ENCODE measurements at regions of chr13 and their contacts with region 1.

Region 1: DNA sequence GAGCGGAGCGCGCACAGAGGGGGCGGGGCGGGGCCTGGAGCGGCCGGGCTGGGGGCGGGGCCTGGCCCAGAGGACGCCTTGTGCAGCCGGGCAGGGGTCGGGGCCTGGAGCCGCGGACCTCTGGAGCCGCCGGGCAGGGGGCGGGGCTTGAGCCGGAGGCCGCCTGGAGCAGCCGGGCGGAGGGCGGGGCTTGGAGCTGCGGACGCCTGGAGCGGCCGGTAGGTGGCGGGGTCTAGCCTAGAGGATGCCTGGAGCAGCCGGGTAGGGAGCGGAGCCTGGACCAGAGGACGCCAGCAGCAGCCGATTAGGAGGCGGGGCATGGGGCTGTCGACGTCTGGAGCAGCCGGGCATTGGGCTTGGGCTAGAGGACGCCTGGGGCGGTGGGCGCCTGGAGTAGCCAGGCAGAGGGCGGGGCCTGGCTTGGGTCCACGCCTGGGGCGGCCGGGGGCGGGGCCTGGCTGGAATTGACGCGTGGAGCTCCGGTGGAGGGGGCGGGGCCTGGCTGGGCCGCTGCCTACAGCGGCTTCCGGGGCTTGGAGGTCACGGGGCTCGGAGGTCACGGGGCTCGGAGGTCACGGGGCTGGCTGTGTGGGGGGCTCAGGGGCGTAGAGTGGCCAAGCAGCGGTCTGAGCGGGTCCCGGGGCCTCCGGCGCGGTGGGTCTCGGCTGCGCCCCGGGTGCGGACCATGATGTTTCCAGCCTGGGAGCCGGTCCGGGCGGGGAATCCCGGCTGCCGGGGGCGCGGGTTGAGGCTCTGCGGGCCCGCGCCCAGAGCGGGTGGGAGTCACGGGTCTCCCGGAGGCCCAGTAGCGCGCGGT is at the start of gene ANKRD10:
- DNase-seq: peak; percentile 95
- H3K4me3 Mint-ChIP-seq: peak within 1 kb of the TSS; percentile 94
- H3K27ac Mint-ChIP-seq: peak within 1 kb of the TSS; percentile 95
- H3K4me1 Mint-ChIP-seq: peaks cover 53% of the 10 kb centered on the region
- H3K27me3 Mint-ChIP-seq: no peaks in the 10 kb centered on the region
- total RNA-seq, gene ANKRD10: 163 and 176 TPM in 2 replicates

Region 2: GRCh38 chr13:110882972-110883371 is 32.3 kb before region 1 on chr13:
- intact Hi-C with region 1: loop called (anchors 2 kb)
- DNase-seq: no peak
- H3K4me3 Mint-ChIP-seq: no peak overlapping the region
- H3K27ac Mint-ChIP-seq: no peak overlapping the region
- H3K4me1 Mint-ChIP-seq: peaks cover 16% of the 10 kb centered on the region
- H3K27me3 Mint-ChIP-seq: no peaks in the 10 kb centered on the region

Region 3: GRCh38 chr13:110965038-110965754 is 49.9 kb after region 1 on chr13:
- intact Hi-C with region 1: loop called (anchors 1 kb)
- DNase-seq: peak; percentile 55
- H3K4me3 Mint-ChIP-seq: peak overlapping the region; percentile 32
- H3K27ac Mint-ChIP-seq: peak overlapping the region; percentile 95
- H3K4me1 Mint-ChIP-seq: peaks cover 54% of the 10 kb centered on the region
- H3K27me3 Mint-ChIP-seq: peaks cover 2% of the 10 kb centered on the region

Region 4: GRCh38 chr13:111066544-111066943 is 151.3 kb after region 1 on chr13:
- intact Hi-C with region 1: loop called (anchors 2 kb)
- DNase-seq: no peak
- H3K4me3 Mint-ChIP-seq: peak overlapping the region; percentile 78
- H3K27ac Mint-ChIP-seq: no peak overlapping the region
- H3K4me1 Mint-ChIP-seq: peaks cover 6% of the 10 kb centered on the region
- H3K27me3 Mint-ChIP-seq: peaks cover 50% of the 10 kb centered on the region

Region 5: DNA sequence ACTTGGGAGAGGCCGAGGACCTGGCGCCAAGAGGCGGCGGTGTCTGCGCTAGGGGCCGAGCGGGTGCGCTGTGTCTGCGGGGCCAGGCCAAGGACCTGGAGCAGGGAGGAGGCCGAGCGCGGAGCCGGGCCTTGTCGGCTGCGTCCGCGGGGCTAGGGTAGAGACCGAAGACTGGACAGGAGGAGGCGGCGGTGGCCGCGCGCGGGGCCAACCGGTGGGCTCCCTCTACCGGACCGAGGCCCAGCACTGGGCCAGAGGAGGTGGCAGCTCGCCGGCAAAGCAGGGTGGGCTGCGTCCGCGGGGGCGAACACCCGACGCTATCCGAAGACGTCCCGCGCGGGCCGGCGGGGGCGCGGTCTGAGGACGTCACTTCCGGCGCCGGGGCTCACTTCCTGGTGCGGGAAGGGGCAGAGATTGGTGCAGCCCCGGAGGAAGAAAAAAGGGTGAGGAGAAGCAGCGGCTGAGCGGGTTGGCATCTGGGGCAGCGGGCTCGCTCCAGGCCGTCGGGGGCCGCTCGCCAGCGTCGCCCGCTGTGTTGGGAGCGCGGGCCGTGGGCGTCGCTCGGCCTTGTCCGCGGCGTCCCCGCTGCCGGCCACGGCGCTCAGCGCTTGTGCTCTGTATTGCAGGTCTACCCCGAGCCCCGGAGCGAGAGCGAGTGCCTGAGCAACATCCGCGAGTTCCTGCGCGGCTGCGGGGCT is 238.2 kb after region 1 on chr13:
- intact Hi-C with region 1: loop called (anchors 1 kb)
- DNase-seq: peak; percentile 91
- H3K4me3 Mint-ChIP-seq: peak overlapping the region; percentile 93
- H3K27ac Mint-ChIP-seq: peak overlapping the region; percentile 97
- H3K4me1 Mint-ChIP-seq: peaks cover 25% of the 10 kb centered on the region
- H3K27me3 Mint-ChIP-seq: peaks cover 29% of the 10 kb centered on the region

Region 6: GRCh38 chr13:111219280-111219679 is 304.0 kb after region 1 on chr13:
- intact Hi-C with region 1: loop called (anchors 2 kb)
- DNase-seq: no peak
- H3K4me3 Mint-ChIP-seq: no peak overlapping the region
- H3K27ac Mint-ChIP-seq: no peak overlapping the region
- H3K4me1 Mint-ChIP-seq: peaks cover 36% of the 10 kb centered on the region
- H3K27me3 Mint-ChIP-seq: no peaks in the 10 kb centered on the region